HCT116 (cell line): ENCODE measurements at regions of chr9 and their contacts with region 1.

Region 1: GRCh38 chr9:116737152-116737546 is 50.0 kb downstream of the TRIM32 start:
- DNase-seq: peak; percentile 64
- ATAC-seq: peak; percentile 97
- H3K4me3 ChIP-seq: no peak overlapping the region
- H3K27ac ChIP-seq: no peak overlapping the region
- H3K4me1 ChIP-seq: no peaks in the 10 kb centered on the region
- H3K27me3 ChIP-seq: peaks cover 21% of the 10 kb centered on the region
- CTCF ChIP-seq: peak; percentile 63 to 95 (median 92); a peak in 5 of 6 replicates
- POLR2A ChIP-seq: no peak
- RAD21 ChIP-seq: peak; percentile 86

Region 2: DNA sequence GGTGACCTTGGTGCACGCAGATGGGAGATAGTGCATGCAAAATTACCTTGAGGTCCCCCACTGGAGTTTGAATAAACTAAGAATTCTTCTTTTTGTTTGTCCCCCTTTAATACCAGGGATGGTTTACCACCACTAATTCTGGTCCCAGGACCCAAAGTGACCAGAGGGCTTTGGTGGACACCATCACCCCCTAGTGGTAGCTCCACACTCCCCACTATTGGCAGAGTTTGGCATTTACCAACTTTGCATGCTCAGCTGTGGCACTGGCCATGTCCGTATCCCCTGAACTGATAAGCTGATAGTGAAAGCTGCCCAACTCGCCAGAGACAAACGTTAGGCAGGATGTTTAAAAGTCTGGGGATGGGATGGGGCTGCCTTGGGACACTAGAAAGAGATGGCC is 674.4 kb after region 1 on chr9:
- CTCF ChIA-PET with region 1: no interaction called
- POLR2A ChIA-PET with region 1: no interaction called
- RAD21 ChIA-PET with region 1: no interaction called
- intact Hi-C with region 1: loop called (anchors 10 kb)
- DNase-seq: no peak
- ATAC-seq: no peak
- H3K4me3 ChIP-seq: no peak overlapping the region
- H3K27ac ChIP-seq: no peak overlapping the region
- H3K4me1 ChIP-seq: no peaks in the 10 kb centered on the region
- H3K27me3 ChIP-seq: no peaks in the 10 kb centered on the region
- CTCF ChIP-seq: peak in 2 of 3 experiments; percentile 42 to 45; a peak in 4 of 6 replicates
- POLR2A ChIP-seq: no peak
- RAD21 ChIP-seq: peak; percentile 17; the same call in 1 of the 2 replicates